Caco-2 (cell line): ENCODE measurements at regions of chr20 and their contacts with region 1.

Region 1: GRCh38 chr20:57514273-57514751 is 10.6 kb downstream of the CTCFL start:
- DNase-seq: peak; percentile 81 to 83
- H3K4me3 ChIP-seq: no peak overlapping the region
- H3K4me3 Mint-ChIP-seq: no peak overlapping the region
- H3K27ac Mint-ChIP-seq: no peak overlapping the region
- H3K4me1 ChIP-seq: no peaks in the 10 kb centered on the region
- H3K4me1 Mint-ChIP-seq: no peaks in the 10 kb centered on the region
- H3K27me3 ChIP-seq: no peaks in the 10 kb centered on the region
- H3K27me3 Mint-ChIP-seq: peaks cover 14% of the 10 kb centered on the region
- CTCF ChIP-seq: peak; percentile 97

Region 2: DNA sequence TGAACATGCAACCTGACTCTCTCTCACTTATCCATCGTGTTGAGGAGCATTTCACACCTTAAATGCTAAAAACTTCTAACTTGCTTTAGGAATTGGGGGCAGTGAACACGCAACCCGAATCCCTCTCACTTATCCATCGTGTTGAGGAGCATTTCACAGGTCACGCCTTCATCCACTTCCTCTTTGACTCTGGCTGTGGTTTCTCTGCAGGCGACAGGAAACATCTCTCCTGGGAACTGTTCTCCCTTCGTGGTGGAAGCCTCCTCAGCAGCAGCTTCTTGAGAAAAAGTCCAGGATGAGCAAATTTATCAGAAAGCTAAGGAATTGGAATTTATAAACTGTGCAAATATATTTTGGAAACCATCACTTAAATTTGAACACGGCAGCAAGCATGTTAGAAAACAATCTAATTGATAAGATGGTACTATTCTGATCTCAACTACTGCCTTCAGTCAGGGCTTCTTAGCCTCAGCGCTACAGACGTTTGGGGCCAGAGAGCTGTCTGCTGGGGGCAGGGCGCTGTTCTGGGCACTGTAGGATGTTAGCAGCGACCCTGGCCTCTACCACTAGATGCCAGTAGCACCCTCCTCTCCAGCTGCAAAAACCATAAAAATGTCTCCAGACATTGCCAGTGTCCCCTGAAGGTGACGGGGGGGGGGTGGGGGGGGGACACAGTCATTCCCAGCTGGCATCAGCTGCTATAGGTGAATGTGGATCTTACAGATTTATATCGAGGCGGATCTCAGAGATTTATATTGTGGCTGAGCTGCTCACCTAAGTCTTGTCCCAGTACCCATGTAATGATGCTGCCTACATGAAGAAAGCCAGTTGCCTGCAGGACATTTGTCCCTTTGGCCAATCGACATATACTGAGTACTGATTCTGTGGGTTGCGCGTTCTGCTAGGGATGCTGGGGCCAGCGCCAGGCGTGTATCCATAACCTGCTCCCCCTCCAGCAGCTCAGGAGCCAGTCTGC is 15.6 kb before region 1 on chr20:
- CTCF ChIA-PET with region 1: interaction called, 12 read pairs
- POLR2A ChIA-PET with region 1: no interaction called
- intact Hi-C with region 1: loop called (anchors 1 kb)
- DNase-seq: peak in 1 of 2 experiments; percentile 65
- H3K4me3 ChIP-seq: no peak overlapping the region
- H3K4me3 Mint-ChIP-seq: no peak overlapping the region
- H3K27ac Mint-ChIP-seq: no peak overlapping the region
- H3K4me1 ChIP-seq: peaks cover 6% of the 10 kb centered on the region; the same call in 1 of the 2 replicates
- H3K4me1 Mint-ChIP-seq: peaks cover 19% of the 10 kb centered on the region
- H3K27me3 ChIP-seq: peaks cover 2% of the 10 kb centered on the region
- H3K27me3 Mint-ChIP-seq: peaks cover 17% of the 10 kb centered on the region
- CTCF ChIP-seq: peak; percentile 43 to 73

Region 3: DNA sequence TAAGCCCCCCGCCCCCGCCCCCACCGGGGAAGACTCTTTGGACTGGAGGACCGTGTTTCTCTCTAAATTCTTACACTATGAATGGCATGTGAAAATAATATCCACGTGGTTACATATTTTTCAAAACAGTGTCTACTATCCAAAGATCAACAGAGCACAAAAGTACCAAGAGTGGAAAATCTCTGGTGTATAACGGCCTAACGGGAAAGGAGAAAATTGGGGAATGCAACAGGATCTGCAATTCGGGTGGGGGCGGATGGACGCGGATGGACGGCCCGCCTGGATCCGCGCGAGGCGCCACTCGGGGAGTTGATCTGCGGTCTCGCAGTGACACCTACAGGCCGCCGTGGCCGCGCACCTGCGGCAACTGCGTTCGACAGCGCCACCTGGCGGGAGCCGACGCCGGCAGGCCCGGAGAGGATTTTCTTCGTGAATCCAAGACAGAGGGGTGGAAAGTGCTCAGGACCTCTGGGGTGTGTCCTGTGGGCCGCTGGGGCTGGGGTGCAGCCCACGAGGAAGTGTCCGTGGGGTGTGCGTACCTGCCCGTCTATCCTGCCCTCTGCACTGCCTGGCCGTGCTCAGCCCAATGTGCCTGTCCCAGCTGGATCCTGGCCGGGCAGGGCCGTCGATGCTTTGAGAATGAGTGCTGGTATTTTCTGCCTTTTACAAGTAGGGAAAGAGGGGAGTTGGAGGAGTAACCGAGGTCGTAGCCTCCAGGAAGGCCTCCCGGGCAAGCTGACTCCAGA is 695.5 kb after region 1 on chr20:
- CTCF ChIA-PET with region 1: interaction called, 3 read pairs
- POLR2A ChIA-PET with region 1: no interaction called
- intact Hi-C with region 1: loop called (anchors 1 kb)
- DNase-seq: peak; percentile 86 to 95
- H3K4me3 ChIP-seq: no peak overlapping the region
- H3K4me3 Mint-ChIP-seq: no peak overlapping the region
- H3K27ac Mint-ChIP-seq: no peak overlapping the region
- H3K4me1 ChIP-seq: no peaks in the 10 kb centered on the region
- H3K4me1 Mint-ChIP-seq: no peaks in the 10 kb centered on the region
- H3K27me3 ChIP-seq: peaks cover 2% of the 10 kb centered on the region
- H3K27me3 Mint-ChIP-seq: peaks cover 38% of the 10 kb centered on the region
- CTCF ChIP-seq: peak; percentile 100